AG04450 (cell line): ENCODE measurements at regions of chr6 and their contacts with region 1.

Region 1: GRCh38 chr6:158496700-158497099 is 63.2 kb upstream of the TMEM181 start:
- DNase-seq: no peak
- H3K4me3 ChIP-seq: no peak overlapping the region
- H3K27ac ChIP-seq: no peak overlapping the region
- H3K27me3 ChIP-seq: no peaks in the 10 kb centered on the region
- CTCF ChIP-seq: no peak

Region 2: GRCh38 chr6:158160932-158161539 is 335.7 kb before region 1 on chr6:
- CTCF ChIA-PET with region 1: interaction called, 13 read pairs
- POLR2A ChIA-PET with region 1: no interaction called
- DNase-seq: peak; percentile 16
- H3K4me3 ChIP-seq: no peak overlapping the region
- H3K27ac ChIP-seq: no peak overlapping the region
- H3K27me3 ChIP-seq: no peaks in the 10 kb centered on the region
- CTCF ChIP-seq: no peak